Colonic mucosa (tissue), 4 donors: ENCODE measurements at regions of chr7 and their contacts with region 1.

Region 1: GRCh38 chr7:149005241-149006050 is 22.9 kb downstream of the PDIA4 start:
- DNase-seq: peak; percentile 80
- H3K4me3 ChIP-seq: no peak overlapping the region
- H3K27ac ChIP-seq: no peak overlapping the region
- H3K4me1 ChIP-seq: no peaks in the 10 kb centered on the region
- H3K27me3 ChIP-seq: no peaks in the 10 kb centered on the region
- CTCF ChIP-seq: peak; percentile 80

Region 2: GRCh38 chr7:149067876-149068275 is 62.4 kb after region 1 on chr7:
- intact Hi-C with region 1: loop called (anchors 2 kb)
- DNase-seq: no peak
- H3K4me3 ChIP-seq: no peak overlapping the region
- H3K27ac ChIP-seq: no peak overlapping the region
- H3K4me1 ChIP-seq: no peaks in the 10 kb centered on the region
- H3K27me3 ChIP-seq: no peaks in the 10 kb centered on the region
- CTCF ChIP-seq: no peak

Region 3: DNA sequence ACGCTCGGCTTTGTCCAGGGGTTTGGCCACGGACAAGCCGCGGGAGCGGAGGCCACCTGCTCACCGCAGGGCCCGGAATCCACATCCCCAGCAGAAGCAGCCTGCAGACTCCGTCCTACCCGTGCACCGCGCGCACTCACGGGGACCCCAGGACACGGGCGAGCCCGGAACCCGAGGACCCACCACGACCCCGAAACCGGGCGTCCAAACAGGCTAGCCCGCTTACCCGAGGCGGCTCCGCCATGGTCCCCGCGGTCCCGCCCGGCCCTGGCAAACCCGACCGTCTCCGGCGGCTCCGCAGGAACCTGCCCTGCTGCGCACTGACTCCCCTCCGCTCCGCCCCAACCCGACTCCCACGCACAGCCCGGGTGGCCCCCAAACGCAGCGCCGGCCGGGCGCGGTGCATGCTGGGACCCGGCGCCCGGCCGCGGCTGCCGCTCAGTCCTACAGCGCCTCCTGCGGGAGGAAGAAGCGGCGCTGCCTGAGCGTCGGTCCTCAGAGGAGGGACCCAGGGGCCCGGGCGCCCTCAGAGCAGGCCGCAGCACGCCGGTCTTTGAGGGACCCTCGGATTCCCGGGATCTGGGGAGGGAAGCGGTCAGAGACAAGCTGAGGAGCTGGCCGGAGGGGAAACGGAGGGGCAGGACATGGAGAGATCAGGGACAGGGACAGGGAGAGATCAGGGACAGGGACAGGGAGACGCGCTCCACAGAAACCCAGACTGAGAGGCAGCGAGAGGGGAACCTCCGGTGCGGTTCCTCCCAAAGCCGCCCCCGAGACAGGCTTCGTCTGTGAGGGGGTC is 85.2 kb after region 1 on chr7 and contains the start of gene ZNF786:
- intact Hi-C with region 1: loop called (anchors 2 kb)
- DNase-seq: peak; percentile 83
- H3K4me3 ChIP-seq: peak within 1 kb of the TSS; percentile 98
- H3K27ac ChIP-seq: peak within 1 kb of the TSS; percentile 100
- H3K4me1 ChIP-seq: peaks cover 3% of the 10 kb centered on the region
- H3K27me3 ChIP-seq: no peaks in the 10 kb centered on the region
- CTCF ChIP-seq: peak; percentile 87
- total RNA-seq, gene ZNF786: 4.8 to 5.4 TPM